SK-N-SH (cell line): ENCODE measurements at regions of chr6 and their contacts with region 1.

Region 1: GRCh38 chr6:3209114-3210023 is 18.1 kb downstream of the TUBB2B start:
- DNase-seq: peak; percentile 76
- H3K4me3 ChIP-seq: peak overlapping the region; percentile 11 to 17; a peak in 1 of 4 replicates
- H3K27ac ChIP-seq: peak overlapping the region; percentile 78 to 80
- H3K4me1 ChIP-seq: peaks cover 16 to 25% of the 10 kb centered on the region in 2 experiments; a peak in 3 of 4 replicates
- H3K27me3 ChIP-seq: no peaks in the 10 kb centered on the region
- CTCF ChIP-seq: peak; percentile 55
- EP300 ChIP-seq: peak; percentile 51 to 65; a peak in 3 of 4 replicates
- RAD21 ChIP-seq: peak; percentile 76

Region 2: GRCh38 chr6:3157131-3157927 is 52.0 kb before region 1 on chr6 and contains the start of gene TUBB2A:
- CTCF ChIA-PET with region 1: interaction called, 10 read pairs
- POLR2A ChIA-PET with region 1: interaction called, 7 read pairs
- DNase-seq: peak; percentile 98
- H3K4me3 ChIP-seq: peak within 1 kb of the TSS; percentile 87 to 95
- H3K27ac ChIP-seq: peak within 1 kb of the TSS; percentile 72 to 74; a peak in 3 of 4 replicates
- H3K4me1 ChIP-seq: peaks cover 5 to 8% of the 10 kb centered on the region in 2 experiments; a peak in 1 of 4 replicates
- H3K27me3 ChIP-seq: no peaks in the 10 kb centered on the region
- CTCF ChIP-seq: peak; percentile 56
- EP300 ChIP-seq: peak in 1 of 2 experiments; percentile 64; a peak in 1 of 4 replicates
- RAD21 ChIP-seq: no peak; the same call in 1 of the 2 replicates
- polyA plus RNA-seq, gene TUBB2A: 169 and 199 TPM in 2 replicates